ENCODE measurements at regions of chr2 and their contacts with region 1.

Region 1: GRCh38 chr2:172102391-172103278 is at the start of gene DLX2:
- DNase-seq: no peak
- H3K4me3 ChIP-seq: peak within 1 kb of the TSS; percentile 81
- CTCF ChIP-seq: no peak

Region 2: DNA sequence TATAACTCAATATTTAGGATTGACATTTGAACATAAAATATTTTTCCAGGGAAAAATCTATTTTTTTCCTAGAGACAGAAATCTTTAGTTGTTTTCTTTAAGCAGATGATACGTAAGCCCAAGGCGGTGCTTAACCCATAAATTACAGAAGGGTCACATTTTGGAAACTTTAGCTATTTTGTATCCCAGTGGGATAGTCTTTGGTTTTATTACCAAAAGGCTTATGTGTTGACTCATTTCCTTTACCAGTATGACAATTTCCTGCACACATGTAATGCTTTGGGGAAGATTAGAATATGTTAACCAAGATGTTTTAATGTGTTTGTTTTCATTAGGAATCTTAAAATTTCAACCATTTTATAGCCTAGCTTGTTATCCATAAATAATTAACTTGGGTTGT is 390.6 kb before region 1 on chr2:
- CTCF ChIA-PET with region 1: interaction called, 355 read pairs
- POLR2A ChIA-PET with region 1: interaction called, 4 read pairs
- DNase-seq: peak; percentile 67
- H3K4me3 ChIP-seq: no peak overlapping the region
- CTCF ChIP-seq: no peak

Region 3: DNA sequence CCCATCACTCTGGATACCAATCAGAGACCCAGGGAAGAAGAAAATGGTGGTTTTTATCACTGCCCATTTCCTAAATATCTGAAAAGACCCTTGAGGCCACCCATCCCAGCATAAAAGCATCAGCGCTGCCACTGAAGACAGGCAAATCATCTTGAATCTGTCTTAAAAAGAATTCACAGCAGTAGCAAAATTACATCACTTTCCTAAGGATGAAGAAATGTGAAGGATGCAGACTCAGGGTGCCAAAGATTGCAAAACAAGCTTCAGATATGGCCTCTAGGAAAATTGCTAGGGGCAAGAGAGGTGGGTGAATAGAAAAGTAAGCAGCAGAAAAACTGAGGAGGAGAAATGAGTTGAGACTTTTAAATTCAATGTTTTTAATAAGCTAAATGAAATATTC is 278.5 kb before region 1 on chr2:
- CTCF ChIA-PET with region 1: interaction called, 23 read pairs
- POLR2A ChIA-PET with region 1: no interaction called
- DNase-seq: peak; percentile 41
- H3K4me3 ChIP-seq: no peak overlapping the region
- CTCF ChIP-seq: no peak

Region 4: GRCh38 chr2:171939743-171940071 is 162.9 kb before region 1 on chr2:
- CTCF ChIA-PET with region 1: interaction called, 41 read pairs
- POLR2A ChIA-PET with region 1: no interaction called
- DNase-seq: no peak
- H3K4me3 ChIP-seq: no peak overlapping the region
- CTCF ChIP-seq: no peak

Region 5: DNA sequence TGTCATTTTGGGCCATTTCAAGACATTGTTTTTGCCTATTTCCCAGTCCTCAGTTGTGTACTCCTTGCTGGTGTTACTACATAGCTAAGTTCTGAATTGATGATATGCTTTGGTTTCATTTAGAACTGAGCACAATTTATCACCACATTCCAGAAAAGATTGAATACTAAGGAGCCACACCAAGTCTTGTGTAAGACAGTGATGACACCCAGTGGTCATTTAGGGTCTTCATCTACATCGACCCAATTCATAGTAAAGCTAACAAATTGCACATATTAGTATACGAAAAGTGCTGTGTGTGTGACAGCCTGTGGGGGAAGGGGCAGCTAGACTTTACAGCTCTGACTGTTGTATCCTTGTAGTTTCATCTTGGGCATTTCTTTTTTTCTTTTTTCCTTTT is 11.0 kb after region 1 on chr2:
- CTCF ChIA-PET with region 1: interaction called, 12 read pairs
- POLR2A ChIA-PET with region 1: interaction called, 3 read pairs
- DNase-seq: no peak
- H3K4me3 ChIP-seq: no peak overlapping the region
- CTCF ChIP-seq: peak; percentile 29

Region 6: DNA sequence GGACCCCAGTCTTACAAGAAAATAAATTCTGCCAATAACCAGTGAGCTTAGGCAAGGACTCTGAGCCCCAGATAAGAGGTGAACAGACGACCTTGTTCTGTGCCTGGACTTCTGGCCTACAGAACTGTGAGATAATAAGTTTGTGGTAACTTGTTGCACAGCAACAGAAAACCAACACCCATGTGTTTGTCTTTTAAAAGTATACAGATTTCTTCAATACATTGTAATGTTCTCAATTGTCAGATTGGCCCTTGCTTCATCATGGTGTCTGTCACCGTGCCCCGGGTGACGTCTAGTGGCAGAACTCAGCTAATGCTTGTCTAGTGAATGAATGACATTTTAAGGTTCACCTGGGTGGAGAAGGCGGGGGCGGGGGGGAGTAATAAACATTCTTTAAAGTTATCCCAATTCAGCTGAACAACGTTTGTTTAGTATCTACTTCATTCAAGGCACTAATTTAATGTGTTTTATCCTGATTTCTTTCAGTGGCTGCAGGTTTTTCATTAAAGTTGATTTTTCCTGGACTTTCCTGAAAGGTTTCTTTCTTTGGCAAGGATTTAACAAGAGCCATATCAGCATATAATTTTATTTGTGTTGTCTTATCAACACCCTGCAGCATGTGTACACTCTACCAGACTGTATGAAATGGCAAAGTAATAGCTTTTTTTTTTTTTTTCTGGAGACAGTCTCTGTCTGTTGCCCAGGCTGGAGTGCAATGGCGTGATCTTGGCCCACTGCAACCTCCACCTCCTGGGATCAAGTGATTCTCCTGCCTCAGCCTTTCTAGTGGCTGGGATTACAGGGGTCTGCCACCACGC is 123.8 kb after region 1 on chr2:
- CTCF ChIA-PET with region 1: no interaction called
- POLR2A ChIA-PET with region 1: no interaction called
- DNase-seq: no peak
- H3K4me3 ChIP-seq: no peak overlapping the region
- CTCF ChIP-seq: no peak

Region 7: GRCh38 chr2:172280571-172281361 is 178.1 kb after region 1 on chr2:
- CTCF ChIA-PET with region 1: no interaction called
- POLR2A ChIA-PET with region 1: no interaction called
- DNase-seq: no peak
- H3K4me3 ChIP-seq: no peak overlapping the region
- CTCF ChIP-seq: no peak

Region 8: DNA sequence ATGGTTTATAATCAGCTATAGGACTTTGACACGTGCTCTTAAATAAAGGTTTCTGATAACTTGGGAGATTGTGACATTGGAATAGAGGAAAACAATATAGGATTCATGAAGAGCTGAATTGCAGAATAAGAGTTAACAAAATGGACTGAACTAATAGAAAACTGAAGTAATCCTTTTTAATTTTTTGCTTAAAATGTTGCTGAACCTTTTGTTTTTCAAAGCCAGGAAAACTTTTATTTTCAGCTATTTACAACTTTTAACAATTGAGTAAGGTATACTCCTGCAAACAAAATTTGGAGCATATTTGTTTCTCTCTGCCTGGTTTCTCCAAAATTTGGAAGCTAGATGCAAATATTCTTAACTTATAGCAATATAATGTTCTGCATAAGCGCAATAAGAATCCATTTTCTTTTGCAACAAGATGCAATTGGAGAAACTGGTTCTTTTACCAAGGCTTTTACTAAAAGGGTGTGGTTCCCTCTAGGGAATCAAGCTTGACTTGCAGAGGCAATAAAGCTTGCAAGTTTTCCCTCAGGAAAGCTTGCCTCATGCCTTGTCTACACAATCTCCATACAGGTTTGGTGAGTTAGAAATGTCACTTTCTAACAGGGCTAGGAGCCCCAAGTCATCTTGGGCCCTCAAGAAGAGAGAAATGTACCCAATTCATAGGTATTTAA is 442.9 kb after region 1 on chr2:
- CTCF ChIA-PET with region 1: no interaction called
- POLR2A ChIA-PET with region 1: no interaction called
- DNase-seq: no peak
- H3K4me3 ChIP-seq: no peak overlapping the region
- CTCF ChIP-seq: no peak

Measured in AG04449 (cell line).